B cell (primary cell): ENCODE measurements at regions of chr1 and their contacts with region 1.

Region 1: GRCh38 chr1:8465692-8466091 is 147.8 kb downstream of the SLC45A1 start:
- DNase-seq: peak; percentile 52
- ATAC-seq: peak; percentile 76
- H3K4me3 ChIP-seq: no peak overlapping the region
- H3K4me3 Mint-ChIP-seq: peak overlapping the region; percentile 47
- H3K27ac ChIP-seq: no peak overlapping the region
- H3K27ac Mint-ChIP-seq: peak overlapping the region; percentile 53
- H3K4me1 ChIP-seq: peaks cover 20 to 28% of the 10 kb centered on the region in 2 donors
- H3K4me1 Mint-ChIP-seq: peaks cover 48% of the 10 kb centered on the region
- H3K27me3 ChIP-seq: no peaks in the 10 kb centered on the region
- H3K27me3 Mint-ChIP-seq: no peaks in the 10 kb centered on the region
- CTCF ChIP-seq: no peak

Region 2: DNA sequence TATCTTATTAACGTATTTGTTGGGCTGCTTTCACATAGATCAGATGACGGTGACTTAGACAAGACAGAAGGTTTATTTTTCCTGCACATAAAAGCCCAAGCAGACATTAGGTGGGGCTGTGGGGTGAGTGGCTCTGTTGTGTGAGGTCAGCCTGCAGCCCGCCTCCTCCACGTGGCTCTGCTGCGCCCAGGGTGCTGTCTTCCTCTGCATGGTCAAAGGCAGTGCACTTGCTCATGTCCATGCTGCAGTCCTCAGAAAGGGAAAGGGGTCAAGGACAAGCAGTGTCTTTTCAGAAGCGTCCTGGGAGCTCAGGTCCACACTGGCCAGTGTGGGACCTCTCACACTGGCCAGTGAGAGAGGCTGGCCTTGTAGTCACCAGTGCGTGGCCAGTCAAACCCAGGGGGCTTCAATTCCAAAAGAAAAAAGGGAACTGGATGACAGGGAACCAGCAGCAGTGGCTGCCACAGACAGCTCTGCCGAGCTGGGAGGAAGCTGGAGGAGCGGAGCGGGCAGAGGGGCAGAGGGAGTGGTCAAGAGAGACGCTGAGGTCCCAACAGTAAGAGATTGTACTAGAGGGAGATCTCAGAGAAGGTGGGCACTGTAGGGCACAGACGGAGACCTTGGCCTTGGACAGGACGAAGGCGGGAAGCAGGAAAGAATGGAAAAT is 183.7 kb before region 1 on chr1:
- CTCF ChIA-PET with region 1: no interaction called
- POLR2A ChIA-PET with region 1: no interaction called
- intact Hi-C with region 1: no loop called
- DNase-seq: no peak
- ATAC-seq: no peak
- H3K4me3 ChIP-seq: no peak overlapping the region
- H3K4me3 Mint-ChIP-seq: no peak overlapping the region
- H3K27ac ChIP-seq: no peak overlapping the region
- H3K27ac Mint-ChIP-seq: no peak overlapping the region
- H3K4me1 ChIP-seq: peaks cover 0 to 4% of the 10 kb centered on the region in 2 donors
- H3K4me1 Mint-ChIP-seq: peaks cover 16% of the 10 kb centered on the region
- H3K27me3 ChIP-seq: peaks cover 0 to 7% (median 3%) of the 10 kb centered on the region in 4 experiments
- H3K27me3 Mint-ChIP-seq: peaks cover 35% of the 10 kb centered on the region
- CTCF ChIP-seq: no peak

Region 3: DNA sequence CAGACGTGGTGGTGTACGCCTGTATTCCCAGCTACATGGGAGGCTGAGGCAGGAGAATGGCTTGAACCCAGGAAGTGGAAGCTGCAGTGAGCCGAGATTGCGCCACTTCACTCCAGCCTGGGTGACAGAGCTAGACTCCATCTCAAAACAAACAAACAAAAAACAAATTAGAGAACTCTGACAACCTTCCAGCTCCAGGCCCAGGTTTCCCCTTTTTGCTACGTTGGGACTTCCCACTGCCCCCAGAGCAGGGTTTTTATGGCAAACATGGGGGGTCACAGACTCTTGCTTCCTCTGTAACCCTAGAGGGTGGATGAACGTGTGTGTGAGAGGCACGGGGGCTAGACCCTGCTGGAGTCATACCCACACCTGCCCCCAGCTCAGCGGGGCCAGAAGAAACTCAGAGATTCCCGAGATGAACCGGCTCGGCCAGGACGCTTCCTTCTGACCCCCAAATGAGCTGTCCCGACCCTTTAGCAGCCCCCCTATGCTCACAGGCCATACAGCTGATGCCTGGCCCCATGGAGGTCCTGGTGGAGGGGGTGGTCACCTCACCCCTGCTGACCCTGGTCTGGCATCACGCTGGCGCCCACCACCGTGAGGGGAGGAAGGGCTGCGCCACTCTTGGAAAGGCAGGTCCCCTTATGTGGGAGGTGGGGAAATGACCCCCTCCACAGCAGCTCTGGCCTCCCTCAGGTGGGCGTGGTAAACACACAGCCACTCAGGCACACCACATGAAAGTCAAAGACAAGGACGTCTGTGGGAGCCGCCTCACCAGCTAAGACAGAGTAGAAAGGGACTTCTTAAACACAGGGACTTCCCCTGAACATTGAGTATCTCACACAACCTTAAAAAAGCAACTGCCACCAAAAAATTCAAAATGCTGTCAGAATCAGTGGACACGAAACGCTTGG is 656.1 kb after region 1 on chr1:
- CTCF ChIA-PET with region 1: no interaction called
- POLR2A ChIA-PET with region 1: interaction called, 10 read pairs
- intact Hi-C with region 1: no loop called
- DNase-seq: peak; percentile 50
- ATAC-seq: peak; percentile 76
- H3K4me3 ChIP-seq: no peak overlapping the region
- H3K4me3 Mint-ChIP-seq: peak overlapping the region; percentile 43
- H3K27ac ChIP-seq: no peak overlapping the region
- H3K27ac Mint-ChIP-seq: no peak overlapping the region
- H3K4me1 ChIP-seq: peaks cover 14 to 23% of the 10 kb centered on the region in 2 donors
- H3K4me1 Mint-ChIP-seq: peaks cover 36% of the 10 kb centered on the region
- H3K27me3 ChIP-seq: no peaks in the 10 kb centered on the region
- H3K27me3 Mint-ChIP-seq: no peaks in the 10 kb centered on the region
- CTCF ChIP-seq: no peak